ENCODE measurements at regions of chr18 and their contacts with region 1.

Region 1: GRCh38 chr18:23479829-23480505 is 23.3 kb upstream of the RMC1 start:
- DNase-seq: no peak
- ATAC-seq: peak in 1 of 4 donors; percentile 36
- H3K4me3 ChIP-seq: no peak overlapping the region
- H3K27ac ChIP-seq: no peak overlapping the region
- H3K4me1 ChIP-seq: peaks cover 0 to 9% (median 0%) of the 10 kb centered on the region in 12 donors
- H3K27me3 ChIP-seq: no peaks in the 10 kb centered on the region
- CTCF ChIP-seq: no peak
- POLR2A ChIP-seq: no peak

Region 2: GRCh38 chr18:23077493-23078256 is 402.3 kb before region 1 on chr18:
- intact Hi-C with region 1: no loop called
- DNase-seq: no peak
- ATAC-seq: no peak
- H3K4me3 ChIP-seq: no peak overlapping the region
- H3K27ac ChIP-seq: peak overlapping the region in 1 of 12 donors; percentile 84
- H3K4me1 ChIP-seq: peaks cover 0 to 23% (median 0%) of the 10 kb centered on the region in 12 donors
- H3K27me3 ChIP-seq: no peaks in the 10 kb centered on the region
- CTCF ChIP-seq: peak in 1 of 12 donors; percentile 7
- POLR2A ChIP-seq: no peak

Region 3: GRCh38 chr18:23356915-23357601 is 122.9 kb before region 1 on chr18:
- intact Hi-C with region 1: no loop called
- DNase-seq: no peak
- ATAC-seq: peak in 2 of 4 donors; percentile 24 to 27
- H3K4me3 ChIP-seq: no peak overlapping the region
- H3K27ac ChIP-seq: peak overlapping the region; percentile 39 to 87 (median 67)
- H3K4me1 ChIP-seq: peaks cover 0 to 33% (median 22%) of the 10 kb centered on the region in 12 donors
- H3K27me3 ChIP-seq: no peaks in the 10 kb centered on the region
- CTCF ChIP-seq: peak in 1 of 12 donors; percentile 2
- POLR2A ChIP-seq: no peak

Region 4: DNA sequence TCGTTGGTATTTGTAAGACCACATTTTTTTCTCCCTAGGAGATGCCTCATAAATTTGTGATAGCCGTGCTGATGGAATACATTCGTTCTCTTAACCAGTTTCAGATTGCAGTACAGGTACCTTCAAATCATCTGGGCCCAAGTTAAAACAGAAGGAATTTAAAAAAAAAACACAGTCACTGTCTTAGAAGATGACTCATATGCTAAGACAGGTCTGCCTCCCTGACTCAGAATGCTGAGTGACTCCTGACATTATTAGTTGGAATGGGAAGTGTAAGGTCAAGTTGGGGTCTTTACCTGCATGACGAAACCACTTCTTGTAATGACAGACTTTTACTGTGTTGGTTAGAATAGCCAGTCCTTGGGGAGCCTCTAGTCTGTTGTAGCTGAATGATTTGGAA is 49.6 kb after region 1 on chr18:
- intact Hi-C with region 1: no loop called
- DNase-seq: no peak
- ATAC-seq: no peak
- H3K4me3 ChIP-seq: no peak overlapping the region
- H3K27ac ChIP-seq: peak overlapping the region in 1 of 12 donors; percentile 78
- H3K4me1 ChIP-seq: peaks cover 0 to 28% (median 0%) of the 10 kb centered on the region in 12 donors
- H3K27me3 ChIP-seq: no peaks in the 10 kb centered on the region
- CTCF ChIP-seq: no peak
- POLR2A ChIP-seq: no peak

Region 5: DNA sequence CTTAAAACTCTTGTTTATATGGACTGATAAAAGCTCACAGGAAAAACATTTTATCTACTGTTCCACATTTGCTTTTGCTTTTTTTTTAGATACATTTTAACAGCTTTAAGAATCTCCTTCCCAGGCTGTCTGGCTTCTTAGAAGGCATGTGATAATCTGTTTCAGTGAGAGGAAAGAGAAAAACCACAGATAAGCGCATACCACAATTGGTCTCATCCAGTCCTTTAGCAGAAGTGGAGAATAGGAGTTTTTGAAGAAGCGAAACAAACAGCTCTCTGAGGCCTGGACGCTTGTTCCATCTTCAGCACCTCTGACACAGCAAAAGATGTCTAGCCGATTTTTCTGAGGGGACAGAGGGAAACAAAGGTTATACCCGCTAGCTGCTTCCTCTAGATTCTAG is 60.9 kb after region 1 on chr18:
- intact Hi-C with region 1: loop called in 1 of 10 experiments (anchors 5 kb)
- DNase-seq: no peak
- ATAC-seq: peak in 3 of 4 donors; percentile 25 to 63 (median 52)
- H3K4me3 ChIP-seq: no peak overlapping the region
- H3K27ac ChIP-seq: peak overlapping the region in 3 of 12 donors; percentile 0 to 89 (median 37)
- H3K4me1 ChIP-seq: peaks cover 0 to 45% (median 8%) of the 10 kb centered on the region in 12 donors
- H3K27me3 ChIP-seq: no peaks in the 10 kb centered on the region
- CTCF ChIP-seq: no peak
- POLR2A ChIP-seq: no peak